Activated CD4-positive, alpha-beta T cell treated with anti-CD3 and anti-CD28 coated beads for 36 hours (primary cell): ENCODE measurements at regions of chr14 and their contacts with region 1.

Region 1: DNA sequence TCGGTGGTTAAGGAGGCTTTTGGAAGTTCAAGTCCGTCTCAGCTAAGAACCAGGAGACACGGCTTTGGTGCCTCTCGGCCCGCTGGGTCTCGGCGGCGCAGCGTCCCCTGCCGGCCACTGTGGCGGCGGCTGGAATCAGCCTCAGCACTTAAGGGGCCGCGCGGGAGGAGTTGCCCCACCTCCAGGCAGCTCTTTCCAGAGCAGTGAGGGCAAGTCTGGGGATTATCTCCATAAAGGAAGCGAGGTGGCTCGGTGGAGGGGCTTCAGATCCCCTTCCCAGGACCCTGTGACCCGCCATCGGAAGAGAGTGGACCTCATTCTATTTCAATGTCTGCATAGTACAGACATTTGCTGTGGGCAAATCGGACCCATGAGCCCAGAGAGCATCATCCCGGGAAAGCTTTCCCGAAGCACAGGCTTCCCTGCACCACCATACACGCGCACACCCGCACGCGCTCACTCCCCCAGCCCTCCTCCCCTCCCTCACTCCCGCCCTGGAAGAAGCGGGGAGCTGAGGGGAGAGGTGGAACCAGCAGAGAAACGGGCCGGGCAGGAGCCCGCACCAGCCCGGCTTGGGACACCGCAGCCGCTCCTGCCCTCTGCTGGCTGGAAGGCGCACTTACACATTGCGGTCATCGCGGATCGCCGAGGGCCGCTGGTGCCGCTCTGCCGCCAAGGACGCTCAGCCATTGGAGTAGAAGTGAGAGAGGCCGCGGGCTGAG is 15.9 kb downstream of the RNASE2 start:
- DNase-seq: peak; percentile 90
- ATAC-seq: peak; percentile 89
- H3K4me3 Mint-ChIP-seq: peak overlapping the region; percentile 76
- H3K27ac Mint-ChIP-seq: peak overlapping the region; percentile 73
- H3K4me1 Mint-ChIP-seq: peaks cover 7% of the 10 kb centered on the region
- H3K27me3 Mint-ChIP-seq: peaks cover 29% of the 10 kb centered on the region

Region 2: DNA sequence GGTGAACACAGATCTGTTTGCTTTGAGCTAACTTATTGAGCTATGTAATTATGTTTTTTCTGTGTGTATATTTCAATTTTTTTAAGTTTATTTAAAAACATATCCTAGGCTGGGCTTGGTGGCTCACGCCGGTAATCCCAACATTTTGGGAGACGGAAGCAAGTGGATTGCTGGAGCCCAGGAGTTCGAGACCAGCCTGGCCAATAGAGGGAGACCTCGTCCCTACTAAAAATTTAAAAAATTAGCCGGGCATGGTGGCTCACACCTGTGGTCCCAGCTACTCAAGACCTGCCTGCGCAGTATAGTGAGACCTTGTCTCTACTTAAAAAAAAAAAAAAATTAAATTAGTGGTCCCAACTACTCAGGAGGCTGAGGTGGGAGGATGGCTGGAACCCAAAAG is 152.3 kb before region 1 on chr14:
- CTCF ChIA-PET with region 1: interaction called, 12 read pairs
- POLR2A ChIA-PET with region 1: no interaction called
- intact Hi-C with region 1: no loop called
- DNase-seq: peak; percentile 25
- ATAC-seq: no peak
- H3K4me3 Mint-ChIP-seq: no peak overlapping the region
- H3K27ac Mint-ChIP-seq: no peak overlapping the region
- H3K4me1 Mint-ChIP-seq: no peaks in the 10 kb centered on the region
- H3K27me3 Mint-ChIP-seq: peaks cover 2% of the 10 kb centered on the region

Region 3: DNA sequence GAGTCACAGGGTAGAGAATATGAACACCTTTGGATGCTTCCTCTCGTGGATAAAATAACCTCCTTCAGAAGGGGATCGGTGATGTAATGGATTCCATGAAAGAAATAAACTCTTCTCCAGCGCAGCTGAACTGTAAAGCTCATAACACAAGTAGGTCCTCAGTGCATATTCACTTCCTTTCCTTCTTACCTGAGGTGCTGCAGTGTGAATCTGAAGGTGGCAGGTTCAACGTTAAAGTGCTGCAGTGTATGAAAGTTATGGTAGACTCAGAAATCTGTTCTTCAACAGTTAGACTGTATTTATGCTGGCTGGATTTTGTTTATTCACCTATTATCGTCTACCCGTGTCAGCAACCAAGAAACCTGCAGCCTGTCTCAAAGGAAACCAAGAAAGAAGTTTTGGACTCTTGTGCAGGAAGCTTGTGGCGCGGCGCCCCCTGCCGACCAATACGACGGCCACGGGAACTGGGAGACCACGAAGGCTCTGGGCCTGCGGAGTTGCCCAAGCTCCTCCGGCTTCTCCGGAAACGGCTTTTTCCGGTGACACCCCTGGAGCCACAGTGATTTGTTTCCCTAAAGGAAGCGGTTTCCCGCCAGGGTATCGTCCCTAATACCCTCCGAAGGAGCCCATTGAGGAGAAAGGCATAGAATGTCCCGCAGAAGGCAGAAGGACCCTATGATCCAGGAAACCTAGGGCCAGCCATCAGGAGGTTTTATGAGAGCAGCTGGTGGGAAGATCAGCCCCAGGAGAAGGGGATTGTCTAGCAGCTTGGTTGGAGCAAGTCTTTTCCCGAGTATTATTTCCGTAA is 97.6 kb before region 1 on chr14:
- CTCF ChIA-PET with region 1: interaction called, 20 read pairs
- POLR2A ChIA-PET with region 1: no interaction called
- intact Hi-C with region 1: loop called (anchors 1 kb)
- DNase-seq: peak; percentile 92
- ATAC-seq: peak; percentile 97
- H3K4me3 Mint-ChIP-seq: peak overlapping the region; percentile 8
- H3K27ac Mint-ChIP-seq: no peak overlapping the region
- H3K4me1 Mint-ChIP-seq: peaks cover 18% of the 10 kb centered on the region
- H3K27me3 Mint-ChIP-seq: peaks cover 2% of the 10 kb centered on the region

Region 4: GRCh38 chr14:20982646-20983369 is 11.7 kb after region 1 on chr14:
- CTCF ChIA-PET with region 1: interaction called, 46 read pairs
- POLR2A ChIA-PET with region 1: no interaction called
- intact Hi-C with region 1: no loop called
- DNase-seq: no peak
- ATAC-seq: no peak
- H3K4me3 Mint-ChIP-seq: no peak overlapping the region
- H3K27ac Mint-ChIP-seq: no peak overlapping the region
- H3K4me1 Mint-ChIP-seq: peaks cover 7% of the 10 kb centered on the region
- H3K27me3 Mint-ChIP-seq: peaks cover 4% of the 10 kb centered on the region

Region 5: DNA sequence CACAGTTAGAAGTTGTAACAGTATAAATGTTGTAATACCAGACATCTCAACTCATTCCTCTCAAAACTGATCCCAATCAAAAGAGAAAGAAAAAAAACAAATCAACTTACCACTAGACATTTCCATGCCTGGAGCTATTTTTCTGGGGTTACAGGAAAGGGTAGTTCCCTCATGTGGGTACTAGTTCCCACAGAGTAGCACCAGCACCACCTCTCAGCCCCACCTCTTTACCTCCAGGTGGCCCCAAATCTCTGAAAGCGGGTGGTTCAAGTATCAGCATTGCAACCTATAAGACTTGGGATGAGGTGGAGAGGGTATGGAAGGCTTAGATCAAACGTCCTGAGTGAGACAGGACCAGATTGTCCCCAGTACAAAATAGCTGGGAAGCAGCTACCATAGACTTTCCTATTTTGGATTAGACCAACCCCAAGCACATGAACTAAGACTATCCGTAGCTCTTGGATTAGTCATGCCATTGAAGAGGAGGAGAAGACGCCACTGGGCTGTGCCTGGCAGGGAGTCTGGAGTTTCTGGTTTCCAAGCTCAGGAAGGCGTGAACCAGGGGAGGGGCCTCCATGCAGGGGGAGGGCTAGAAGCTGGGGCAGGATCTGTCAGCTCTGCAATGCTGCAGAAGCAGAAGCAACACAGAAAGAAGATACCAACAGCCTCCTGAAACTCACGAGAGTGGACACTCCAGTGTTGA is 27.7 kb after region 1 on chr14 and contains the start of gene SLC39A2:
- CTCF ChIA-PET with region 1: interaction called, 14 read pairs
- POLR2A ChIA-PET with region 1: no interaction called
- intact Hi-C with region 1: no loop called
- DNase-seq: no peak
- ATAC-seq: peak; percentile 36
- H3K4me3 Mint-ChIP-seq: no peak within 1 kb of the TSS
- H3K27ac Mint-ChIP-seq: no peak within 1 kb of the TSS
- H3K4me1 Mint-ChIP-seq: peaks cover 23% of the 10 kb centered on the region
- H3K27me3 Mint-ChIP-seq: no peaks in the 10 kb centered on the region
- total RNA-seq, gene SLC39A2: 0.21 to 0.30 TPM